Activated naive CD4-positive, alpha-beta T cell treated with anti-CD3 and anti-CD28 coated beads for 36 hours (primary cell): ENCODE measurements at regions of chr4 and their contacts with region 1.

Region 1: GRCh38 chr4:48141048-48141447 is 7.0 kb upstream of the TXK start:
- DNase-seq: no peak
- H3K4me3 Mint-ChIP-seq: no peak overlapping the region
- H3K27ac Mint-ChIP-seq: no peak overlapping the region
- H3K4me1 Mint-ChIP-seq: peaks cover 46% of the 10 kb centered on the region
- H3K27me3 Mint-ChIP-seq: no peaks in the 10 kb centered on the region

Region 2: GRCh38 chr4:47686294-47686872 is 454.7 kb before region 1 on chr4:
- CTCF ChIA-PET with region 1: no interaction called
- intact Hi-C with region 1: loop called (anchors 1 kb)
- DNase-seq: peak; percentile 85
- H3K4me3 Mint-ChIP-seq: no peak overlapping the region
- H3K27ac Mint-ChIP-seq: no peak overlapping the region
- H3K4me1 Mint-ChIP-seq: no peaks in the 10 kb centered on the region
- H3K27me3 Mint-ChIP-seq: peaks cover 4% of the 10 kb centered on the region

Region 3: GRCh38 chr4:47926639-47927258 is 214.3 kb before region 1 on chr4:
- CTCF ChIA-PET with region 1: interaction called, 3 read pairs
- intact Hi-C with region 1: loop called (anchors 1 kb)
- DNase-seq: peak; percentile 74
- H3K4me3 Mint-ChIP-seq: peak overlapping the region; percentile 63
- H3K27ac Mint-ChIP-seq: no peak overlapping the region
- H3K4me1 Mint-ChIP-seq: peaks cover 8% of the 10 kb centered on the region
- H3K27me3 Mint-ChIP-seq: peaks cover 11% of the 10 kb centered on the region

Region 4: GRCh38 chr4:48016141-48017103 is 124.6 kb before region 1 on chr4 and contains the starts of genes CNGA1 and NIPAL1:
- CTCF ChIA-PET with region 1: interaction called, 4 read pairs
- intact Hi-C with region 1: loop called (anchors 1 kb)
- DNase-seq: peak; percentile 72
- H3K4me3 Mint-ChIP-seq: peak within 1 kb of the TSS; percentile 81
- H3K27ac Mint-ChIP-seq: peak within 1 kb of the TSS; percentile 46
- H3K4me1 Mint-ChIP-seq: peaks cover 26% of the 10 kb centered on the region
- H3K27me3 Mint-ChIP-seq: peaks cover 5% of the 10 kb centered on the region
- total RNA-seq, gene CNGA1: 0.26 to 0.94 TPM
- total RNA-seq, gene NIPAL1: 1.0 to 2.0 TPM

Region 5: DNA sequence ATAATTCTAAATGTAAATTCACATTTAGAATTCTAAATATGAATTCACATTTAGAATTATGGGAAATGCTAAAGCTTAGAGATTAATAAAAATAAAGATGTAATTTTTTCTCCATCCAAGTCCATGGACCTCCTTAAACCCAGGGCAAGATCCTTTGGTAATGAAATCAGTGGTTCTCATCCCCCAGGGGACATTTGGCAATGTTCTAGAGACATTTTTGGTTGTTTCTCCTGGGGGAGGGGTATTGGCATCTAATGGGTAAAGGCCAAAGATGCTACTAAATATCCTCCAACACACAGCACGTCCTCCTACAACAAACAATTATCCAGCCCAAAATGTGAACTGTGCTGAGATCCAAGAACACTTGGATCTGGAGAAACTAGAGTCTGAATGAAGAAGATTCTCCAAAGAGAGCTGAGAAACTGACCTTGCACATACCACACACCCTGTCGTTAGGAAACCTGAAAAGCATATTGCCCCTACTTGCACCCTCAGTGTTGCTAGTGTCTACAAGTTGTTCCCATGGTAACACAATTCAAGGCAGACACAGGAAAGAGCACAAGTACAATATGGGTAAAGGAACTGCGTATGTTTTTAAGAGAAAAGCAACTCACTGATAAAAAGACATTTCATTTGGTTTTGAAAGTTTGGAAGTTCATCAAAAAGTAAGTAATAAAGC is 82.6 kb before region 1 on chr4:
- CTCF ChIA-PET with region 1: no interaction called
- intact Hi-C with region 1: no loop called
- DNase-seq: no peak
- H3K4me3 Mint-ChIP-seq: no peak overlapping the region
- H3K27ac Mint-ChIP-seq: no peak overlapping the region
- H3K4me1 Mint-ChIP-seq: no peaks in the 10 kb centered on the region
- H3K27me3 Mint-ChIP-seq: no peaks in the 10 kb centered on the region

Region 6: GRCh38 chr4:48085821-48086607 is 55.0 kb before region 1 on chr4:
- CTCF ChIA-PET with region 1: interaction called, 29 read pairs
- intact Hi-C with region 1: loop called (anchors 1 kb)
- DNase-seq: no peak
- H3K4me3 Mint-ChIP-seq: no peak overlapping the region
- H3K27ac Mint-ChIP-seq: no peak overlapping the region
- H3K4me1 Mint-ChIP-seq: peaks cover 27% of the 10 kb centered on the region
- H3K27me3 Mint-ChIP-seq: no peaks in the 10 kb centered on the region

Region 7: GRCh38 chr4:48103483-48104139 is 37.4 kb before region 1 on chr4:
- CTCF ChIA-PET with region 1: interaction called, 33 read pairs
- intact Hi-C with region 1: loop called (anchors 1 kb)
- DNase-seq: peak; percentile 64
- H3K4me3 Mint-ChIP-seq: no peak overlapping the region
- H3K27ac Mint-ChIP-seq: peak overlapping the region; percentile 93
- H3K4me1 Mint-ChIP-seq: peaks cover 46% of the 10 kb centered on the region
- H3K27me3 Mint-ChIP-seq: no peaks in the 10 kb centered on the region

Region 8: GRCh38 chr4:48122756-48123155 is 18.3 kb before region 1 on chr4:
- CTCF ChIA-PET with region 1: interaction called, 162 read pairs
- intact Hi-C with region 1: loop called (anchors 2 kb)
- DNase-seq: no peak
- H3K4me3 Mint-ChIP-seq: no peak overlapping the region
- H3K27ac Mint-ChIP-seq: no peak overlapping the region
- H3K4me1 Mint-ChIP-seq: peaks cover 67% of the 10 kb centered on the region
- H3K27me3 Mint-ChIP-seq: no peaks in the 10 kb centered on the region

Region 9: GRCh38 chr4:48526406-48526805 is 385.4 kb after region 1 on chr4:
- CTCF ChIA-PET with region 1: no interaction called
- intact Hi-C with region 1: no loop called
- DNase-seq: no peak
- H3K4me3 Mint-ChIP-seq: no peak overlapping the region
- H3K27ac Mint-ChIP-seq: no peak overlapping the region
- H3K4me1 Mint-ChIP-seq: no peaks in the 10 kb centered on the region
- H3K27me3 Mint-ChIP-seq: no peaks in the 10 kb centered on the region